Activated CD4-positive, alpha-beta T cell treated with anti-CD3 and anti-CD28 coated beads, Interleukin-2, amount 10 ng/mL, durations not matched to agents 7 days and 5 days (primary cell): ENCODE measurements at regions of chr13 and their contacts with region 1.

Region 1: GRCh38 chr13:41013835-41014234 is 5.3 kb downstream of the ELF1 start:
- DNase-seq: no peak
- H3K4me3 Mint-ChIP-seq: peak overlapping the region; percentile 98
- H3K27ac Mint-ChIP-seq: peak overlapping the region; percentile 87
- H3K4me1 Mint-ChIP-seq: peaks cover 53% of the 10 kb centered on the region
- H3K27me3 Mint-ChIP-seq: no peaks in the 10 kb centered on the region

Region 2: GRCh38 chr13:40692946-40693345 is 320.9 kb before region 1 on chr13:
- CTCF ChIA-PET with region 1: no interaction called
- POLR2A ChIA-PET with region 1: no interaction called
- DNase-seq: no peak
- H3K4me3 Mint-ChIP-seq: no peak overlapping the region
- H3K27ac Mint-ChIP-seq: no peak overlapping the region
- H3K4me1 Mint-ChIP-seq: no peaks in the 10 kb centered on the region
- H3K27me3 Mint-ChIP-seq: no peaks in the 10 kb centered on the region

Region 3: DNA sequence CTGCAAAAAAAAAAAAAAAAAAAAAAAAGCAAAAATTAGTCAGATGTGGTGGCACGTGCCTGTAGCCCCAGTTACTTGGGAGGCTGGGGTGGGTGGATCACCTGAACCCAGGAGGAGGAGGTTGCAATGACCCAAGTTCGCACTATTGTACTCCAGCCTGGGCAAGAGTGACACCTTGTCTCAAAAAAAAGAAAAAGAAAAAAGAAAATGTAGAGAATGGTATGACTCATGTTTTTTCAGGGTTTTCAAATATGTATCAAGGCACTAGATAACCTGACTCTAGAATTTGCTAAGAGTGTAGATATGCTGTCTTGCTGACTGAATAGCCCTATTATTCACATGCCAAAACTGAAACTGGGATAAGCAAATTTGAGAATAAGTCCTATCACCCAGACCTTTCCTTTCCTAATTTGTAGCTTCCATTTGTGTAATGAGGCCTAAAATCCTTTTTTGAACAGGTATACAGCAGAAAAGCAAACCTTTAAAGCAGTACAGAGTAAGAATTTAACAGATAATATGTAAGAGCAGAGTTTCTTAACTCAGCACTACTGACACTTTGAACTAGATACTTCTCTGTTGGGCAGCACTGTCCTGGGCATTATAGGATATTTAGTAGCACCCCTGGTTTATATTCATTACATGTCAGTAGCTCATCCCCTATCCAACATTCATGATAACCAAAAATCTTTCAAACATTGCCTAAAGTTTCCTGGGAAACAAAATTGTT is 103.3 kb before region 1 on chr13:
- CTCF ChIA-PET with region 1: no interaction called
- POLR2A ChIA-PET with region 1: no interaction called
- DNase-seq: no peak
- H3K4me3 Mint-ChIP-seq: no peak overlapping the region
- H3K27ac Mint-ChIP-seq: no peak overlapping the region
- H3K4me1 Mint-ChIP-seq: peaks cover 2% of the 10 kb centered on the region
- H3K27me3 Mint-ChIP-seq: no peaks in the 10 kb centered on the region

Region 4: GRCh38 chr13:40982772-40983171 is 31.1 kb before region 1 on chr13:
- CTCF ChIA-PET with region 1: interaction called, 10 read pairs
- POLR2A ChIA-PET with region 1: interaction called, 15 read pairs
- DNase-seq: peak; percentile 80
- H3K4me3 Mint-ChIP-seq: peak overlapping the region; percentile 96
- H3K27ac Mint-ChIP-seq: peak overlapping the region; percentile 89
- H3K4me1 Mint-ChIP-seq: peaks cover 58% of the 10 kb centered on the region
- H3K27me3 Mint-ChIP-seq: no peaks in the 10 kb centered on the region